PC-9 (cell line): ENCODE measurements at regions of chr9 and their contacts with region 1.

Region 1: DNA sequence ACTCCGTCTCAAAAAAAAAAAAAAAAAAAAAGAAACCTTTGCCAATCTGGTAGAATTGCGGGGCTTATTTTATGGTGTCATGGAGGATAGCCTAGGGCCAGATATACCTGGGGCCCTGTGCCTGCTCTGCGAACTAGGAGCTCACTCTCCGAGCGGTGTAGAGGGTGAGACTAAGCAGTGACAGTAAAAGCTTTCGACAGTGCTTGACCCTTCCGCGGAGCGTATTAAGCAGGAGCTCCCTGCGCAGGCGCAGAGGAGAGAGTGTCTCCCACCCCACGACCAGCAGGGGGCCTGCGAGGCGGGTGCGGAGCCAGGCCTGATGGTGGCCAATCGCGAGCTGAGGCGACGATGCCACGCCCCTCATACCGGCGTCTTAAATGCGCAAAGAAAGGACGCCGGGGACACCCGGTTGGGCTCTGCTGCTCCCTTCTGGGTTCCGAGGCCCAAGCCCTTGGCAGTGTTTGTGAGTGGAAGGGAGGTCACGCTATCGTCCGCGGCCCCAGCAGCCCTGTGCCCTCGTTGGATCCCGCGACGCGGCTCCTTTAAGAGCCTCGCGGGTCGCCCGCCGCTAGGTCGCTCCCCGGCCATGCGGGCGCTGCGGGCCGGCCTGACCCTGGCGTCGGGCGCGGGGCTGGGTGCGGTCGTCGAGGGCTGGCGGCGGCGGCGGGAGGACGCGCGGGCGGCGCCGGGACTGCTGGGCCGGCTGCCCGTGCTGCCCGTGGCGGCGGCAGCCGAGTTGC is at the start of gene ENDOG:
- DNase-seq: peak; percentile 90 to 100
- H3K4me3 ChIP-seq: peak within 1 kb of the TSS; percentile 58
- H3K27ac ChIP-seq: no peak within 1 kb of the TSS
- H3K4me1 ChIP-seq: peaks cover 7% of the 10 kb centered on the region; the same call in 1 of the 2 replicates
- H3K27me3 ChIP-seq: no peaks in the 10 kb centered on the region
- CTCF ChIP-seq: peak; percentile 90
- total RNA-seq, gene ENDOG: 28.6 and 47.9 TPM in 2 replicates

Region 2: DNA sequence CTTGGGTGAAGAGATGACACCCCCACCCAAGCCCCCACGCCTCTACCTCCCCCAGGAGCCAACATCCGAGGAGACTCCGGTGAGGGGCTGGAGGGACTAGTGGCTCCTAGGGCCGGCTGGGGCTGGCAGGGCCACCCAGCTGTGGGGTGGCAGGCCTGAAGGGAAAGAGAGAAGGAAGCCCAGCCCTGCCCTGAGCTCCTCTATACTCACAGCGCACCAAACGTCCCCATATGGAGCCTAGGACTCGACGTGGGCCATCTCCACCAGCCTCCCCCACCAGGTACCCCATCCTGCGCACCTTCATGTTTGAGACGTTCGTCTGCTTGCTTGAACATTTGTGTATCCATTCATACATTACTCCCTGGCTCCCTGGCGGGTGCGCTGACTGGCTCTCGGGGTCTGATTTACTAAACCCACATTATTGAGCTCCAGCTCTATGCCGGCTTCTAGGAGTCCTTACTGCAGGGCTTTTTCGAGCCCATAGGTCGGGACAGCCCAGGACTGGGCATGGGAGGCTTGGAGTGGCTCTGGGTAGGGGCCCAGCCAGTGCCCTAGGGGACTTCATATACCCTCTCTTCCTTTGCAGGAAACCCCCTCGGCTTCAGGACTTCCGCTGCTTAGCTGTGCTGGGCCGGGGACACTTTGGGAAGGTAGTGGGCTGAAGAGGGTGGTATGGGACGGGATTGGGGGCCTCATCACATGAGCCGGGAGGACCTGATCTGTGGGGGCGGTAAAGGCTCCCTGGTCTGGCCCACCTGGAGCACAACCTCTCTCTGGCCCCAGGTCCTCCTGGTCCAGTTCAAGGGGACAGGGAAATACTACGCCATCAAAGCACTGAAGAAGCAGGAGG is 103.5 kb before region 1 on chr9:
- CTCF ChIA-PET with region 1: interaction called, 3 read pairs
- POLR2A ChIA-PET with region 1: interaction called, 10 read pairs
- intact Hi-C with region 1: loop called (anchors 10 kb)
- DNase-seq: no peak
- H3K4me3 ChIP-seq: no peak overlapping the region
- H3K27ac ChIP-seq: no peak overlapping the region
- H3K4me1 ChIP-seq: peaks cover 4% of the 10 kb centered on the region; the same call in 1 of the 2 replicates
- H3K27me3 ChIP-seq: no peaks in the 10 kb centered on the region
- CTCF ChIP-seq: no peak

Region 3: DNA sequence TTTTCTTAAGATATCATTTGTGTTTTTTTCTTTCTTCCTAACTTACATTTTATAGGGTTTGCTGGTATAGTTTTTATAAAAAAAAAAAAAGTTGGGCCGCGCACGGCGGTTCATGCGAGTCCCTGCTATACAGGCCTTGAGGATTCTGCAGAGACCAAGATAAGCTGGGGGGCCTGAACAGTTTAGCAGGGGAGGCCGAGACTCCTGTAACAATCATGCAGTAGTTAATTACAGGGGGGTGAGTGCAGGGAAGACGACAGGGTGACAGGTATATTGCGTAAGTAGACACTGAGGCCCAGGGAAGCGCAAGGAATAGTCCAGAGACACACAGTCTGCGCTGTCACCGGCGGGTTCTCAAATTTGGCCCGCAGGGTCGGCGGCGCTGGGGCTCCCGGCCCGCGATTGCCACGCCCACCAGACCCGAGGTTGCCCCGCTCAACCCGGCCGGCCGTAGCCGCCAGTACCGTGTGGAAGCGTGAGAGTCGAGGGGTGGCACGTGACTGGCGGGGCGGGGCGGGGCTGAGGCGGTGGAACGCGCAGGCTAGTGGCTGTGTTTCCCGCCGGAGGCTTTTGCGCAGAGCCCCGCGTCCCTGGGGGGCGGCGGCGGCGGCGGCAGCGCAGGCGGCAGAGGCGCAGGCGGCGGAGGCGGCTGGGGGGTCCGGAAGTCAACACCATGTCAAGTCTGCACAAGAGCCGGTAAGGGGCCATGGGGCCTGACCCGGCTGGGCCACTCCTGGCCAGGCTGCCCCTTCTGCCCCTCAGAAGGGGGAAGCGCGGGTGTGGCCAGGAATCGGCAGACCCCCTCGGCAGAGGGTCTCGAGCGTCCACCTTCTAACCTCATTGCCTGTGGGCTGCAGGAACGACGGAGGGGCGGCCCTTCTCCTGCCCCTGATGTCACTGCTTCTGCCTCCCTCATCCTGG is 31.3 kb before region 1 on chr9 and contains the start of gene TBC1D13:
- CTCF ChIA-PET with region 1: interaction called, 4 read pairs
- POLR2A ChIA-PET with region 1: interaction called, 12 read pairs
- intact Hi-C with region 1: no loop called
- DNase-seq: peak; percentile 71 to 88
- H3K4me3 ChIP-seq: peak within 1 kb of the TSS; percentile 96
- H3K27ac ChIP-seq: peak within 1 kb of the TSS; percentile 43
- H3K4me1 ChIP-seq: peaks cover 16% of the 10 kb centered on the region
- H3K27me3 ChIP-seq: no peaks in the 10 kb centered on the region
- CTCF ChIP-seq: no peak
- total RNA-seq, gene TBC1D13: 38.2 and 41.9 TPM in 2 replicates

Region 4: GRCh38 chr9:128987805-128988204 is 169.5 kb after region 1 on chr9:
- CTCF ChIA-PET with region 1: no interaction called
- POLR2A ChIA-PET with region 1: interaction called, 11 read pairs
- intact Hi-C with region 1: no loop called
- DNase-seq: no peak
- H3K4me3 ChIP-seq: no peak overlapping the region
- H3K27ac ChIP-seq: no peak overlapping the region
- H3K4me1 ChIP-seq: no peaks in the 10 kb centered on the region
- H3K27me3 ChIP-seq: no peaks in the 10 kb centered on the region
- CTCF ChIP-seq: no peak

Region 5: GRCh38 chr9:129097671-129098295 is 279.5 kb after region 1 on chr9:
- CTCF ChIA-PET with region 1: interaction called, 12 read pairs
- POLR2A ChIA-PET with region 1: no interaction called
- intact Hi-C with region 1: no loop called
- DNase-seq: peak in 1 of 2 experiments; percentile 30
- H3K4me3 ChIP-seq: no peak overlapping the region
- H3K27ac ChIP-seq: no peak overlapping the region
- H3K4me1 ChIP-seq: peaks cover 2% of the 10 kb centered on the region
- H3K27me3 ChIP-seq: no peaks in the 10 kb centered on the region
- CTCF ChIP-seq: no peak